HepG2 (cell line): ENCODE measurements at regions of chrX and their contacts with region 1.

Region 1: GRCh38 chrX:96770315-96770714 is 85.7 kb downstream of the DIAPH2 start:
- DNase-seq: peak; percentile 0
- ATAC-seq: no peak
- H3K4me3 ChIP-seq: no peak overlapping the region
- H3K27ac ChIP-seq: no peak overlapping the region
- H3K4me1 ChIP-seq: no peaks in the 10 kb centered on the region
- H3K27me3 ChIP-seq: no peaks in the 10 kb centered on the region
- CTCF ChIP-seq: peak; percentile 33
- EP300 ChIP-seq: no peak
- POLR2A ChIP-seq: no peak
- RAD21 ChIP-seq: no peak

Region 2: DNA sequence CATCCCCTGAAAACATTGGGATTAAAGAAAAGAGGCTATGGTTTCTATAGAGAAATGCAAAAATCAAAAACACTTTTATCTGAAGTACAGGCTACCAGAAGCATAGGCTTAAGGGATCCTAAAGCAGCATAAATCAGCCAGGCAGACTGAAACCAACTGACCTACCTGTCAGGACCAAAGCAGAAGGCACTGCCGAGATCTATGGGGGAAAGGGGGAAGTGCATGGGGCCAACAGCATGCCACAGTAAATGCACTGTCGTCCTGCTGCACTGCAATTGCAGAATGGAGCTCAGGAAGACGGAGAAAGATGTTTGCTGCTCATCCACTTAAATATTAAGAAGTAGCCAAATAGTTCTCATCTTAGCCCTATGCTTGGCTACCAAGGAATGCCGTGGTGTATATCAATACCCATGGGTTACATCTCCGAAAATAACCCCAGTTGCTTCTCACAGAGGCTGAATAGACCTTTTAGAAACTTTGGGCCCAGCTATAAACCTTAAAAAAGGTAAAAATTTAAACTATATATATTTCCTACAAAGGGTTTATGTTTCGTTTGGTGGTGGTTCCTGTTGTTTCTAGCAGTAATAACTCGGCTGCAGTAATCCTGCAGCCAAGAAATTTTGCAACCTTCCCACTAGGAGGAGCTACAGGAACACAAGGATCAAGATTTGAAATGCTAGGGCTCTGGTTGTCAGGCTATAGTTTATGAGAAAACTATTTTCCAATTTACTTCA is 397.8 kb before region 1 on chrX:
- CTCF ChIA-PET with region 1: no interaction called
- POLR2A ChIA-PET with region 1: no interaction called
- in situ Hi-C with region 1: no loop called
- intact Hi-C with region 1: loop called (anchors 2 kb)
- DNase-seq: peak; percentile 27
- ATAC-seq: peak; percentile 62
- H3K4me3 ChIP-seq: no peak overlapping the region
- H3K27ac ChIP-seq: no peak overlapping the region
- H3K4me1 ChIP-seq: no peaks in the 10 kb centered on the region
- H3K27me3 ChIP-seq: no peaks in the 10 kb centered on the region
- CTCF ChIP-seq: peak; percentile 56
- EP300 ChIP-seq: no peak
- POLR2A ChIP-seq: no peak
- RAD21 ChIP-seq: no peak

Region 3: DNA sequence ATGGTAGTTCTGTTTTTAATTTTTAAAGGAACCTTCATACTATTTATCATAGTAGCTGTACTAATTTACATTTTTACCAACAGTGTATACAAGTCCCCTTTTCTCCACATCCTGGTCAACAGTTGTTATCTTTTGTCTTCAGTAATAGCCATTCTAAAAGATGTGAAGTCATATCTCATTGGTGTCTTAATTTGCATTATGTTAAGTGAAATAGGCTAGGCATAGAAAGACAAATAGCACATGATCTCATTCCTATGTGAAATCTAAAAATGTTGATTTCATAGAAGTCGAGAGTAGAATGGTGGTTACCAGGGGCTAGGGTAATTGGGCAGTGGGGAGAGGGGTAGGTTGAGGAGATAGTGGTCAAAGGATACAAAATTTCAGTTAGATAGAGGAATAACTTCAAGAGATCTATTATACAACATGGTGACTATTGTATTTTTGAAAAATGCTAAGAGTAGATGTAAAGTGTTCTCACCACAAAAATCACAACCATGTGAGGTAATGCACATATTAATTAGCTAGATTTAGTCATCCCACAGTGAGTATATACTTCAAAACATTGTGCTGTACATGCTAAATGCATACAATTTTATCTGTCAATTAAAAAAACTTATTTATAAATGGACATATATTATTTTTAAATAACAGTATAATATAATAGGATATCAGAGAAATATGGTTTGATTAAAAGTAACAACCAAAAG is 26.8 kb before region 1 on chrX:
- CTCF ChIA-PET with region 1: no interaction called
- POLR2A ChIA-PET with region 1: no interaction called
- in situ Hi-C with region 1: no loop called
- intact Hi-C with region 1: no loop called
- DNase-seq: no peak
- ATAC-seq: no peak
- H3K4me3 ChIP-seq: no peak overlapping the region
- H3K27ac ChIP-seq: no peak overlapping the region
- H3K4me1 ChIP-seq: peaks cover 7% of the 10 kb centered on the region; the same call in 1 of the 2 replicates
- H3K27me3 ChIP-seq: no peaks in the 10 kb centered on the region
- CTCF ChIP-seq: no peak
- EP300 ChIP-seq: no peak
- POLR2A ChIP-seq: no peak
- RAD21 ChIP-seq: no peak

Region 4: DNA sequence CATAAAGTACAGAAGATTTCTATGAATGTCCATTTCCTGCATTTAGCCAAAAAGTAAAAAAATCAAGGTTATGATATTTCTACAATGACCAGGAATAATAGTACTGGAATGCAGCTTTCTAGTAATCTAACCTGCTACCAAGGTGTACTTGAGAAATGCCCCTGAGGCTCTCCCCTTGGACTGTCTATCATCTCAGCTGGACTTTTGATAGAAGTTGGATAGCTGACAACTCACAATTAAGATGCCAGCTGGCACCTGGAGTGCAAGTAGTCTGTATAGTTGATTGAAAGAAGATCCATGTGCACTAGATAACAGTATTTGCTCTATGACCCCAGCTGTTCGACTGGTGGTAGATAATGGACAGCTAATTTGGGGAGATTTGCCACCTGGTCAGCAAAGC is 123.2 kb after region 1 on chrX:
- CTCF ChIA-PET with region 1: no interaction called
- POLR2A ChIA-PET with region 1: no interaction called
- in situ Hi-C with region 1: no loop called
- intact Hi-C with region 1: no loop called
- DNase-seq: no peak
- ATAC-seq: no peak
- H3K4me3 ChIP-seq: no peak overlapping the region
- H3K27ac ChIP-seq: no peak overlapping the region
- H3K4me1 ChIP-seq: no peaks in the 10 kb centered on the region
- H3K27me3 ChIP-seq: no peaks in the 10 kb centered on the region
- CTCF ChIP-seq: no peak
- EP300 ChIP-seq: no peak
- POLR2A ChIP-seq: no peak
- RAD21 ChIP-seq: no peak

Region 5: GRCh38 chrX:97685753-97686152 is 915.4 kb after region 1 on chrX:
- CTCF ChIA-PET with region 1: no interaction called
- POLR2A ChIA-PET with region 1: no interaction called
- in situ Hi-C with region 1: no loop called
- intact Hi-C with region 1: loop called (anchors 5 kb)
- DNase-seq: peak; percentile 11
- ATAC-seq: peak; percentile 48; the same call in 1 of the 3 replicates
- H3K4me3 ChIP-seq: no peak overlapping the region
- H3K27ac ChIP-seq: no peak overlapping the region
- H3K4me1 ChIP-seq: no peaks in the 10 kb centered on the region
- H3K27me3 ChIP-seq: no peaks in the 10 kb centered on the region
- CTCF ChIP-seq: peak; percentile 49
- EP300 ChIP-seq: no peak
- POLR2A ChIP-seq: no peak
- RAD21 ChIP-seq: no peak